GM12878 (cell line): ENCODE measurements at regions of chr6 and their contacts with region 1.

Region 1: GRCh38 chr6:47631269-47631772 is 67.1 kb upstream of the ADGRF4 start:
- DNase-seq: peak; percentile 32
- ATAC-seq: peak; percentile 79
- H3K4me3 ChIP-seq: no peak overlapping the region
- H3K27ac ChIP-seq: no peak overlapping the region
- H3K4me1 ChIP-seq: no peaks in the 10 kb centered on the region
- H3K27me3 ChIP-seq: no peaks in the 10 kb centered on the region
- CTCF ChIP-seq: peak; percentile 31 to 57 (median 41); a peak in 4 of 6 replicates
- EP300 ChIP-seq: no peak
- POLR2A ChIP-seq: no peak
- RAD21 ChIP-seq: peak; percentile 87

Region 2: GRCh38 chr6:47407348-47408281 is 223.7 kb before region 1 on chr6:
- CTCF ChIA-PET with region 1: interaction called, 84 read pairs
- POLR2A ChIA-PET with region 1: no interaction called
- RAD21 ChIA-PET with region 1: interaction called, 47 read pairs
- SMC1A ChIA-PET with region 1: interaction called, 48 read pairs
- in situ Hi-C with region 1: loop called (anchors 10 kb)
- intact Hi-C with region 1: no loop called
- DNase-seq: no peak
- ATAC-seq: no peak
- H3K4me3 ChIP-seq: no peak overlapping the region
- H3K27ac ChIP-seq: no peak overlapping the region
- H3K4me1 ChIP-seq: no peaks in the 10 kb centered on the region
- H3K27me3 ChIP-seq: no peaks in the 10 kb centered on the region
- CTCF ChIP-seq: no peak
- EP300 ChIP-seq: no peak
- POLR2A ChIP-seq: no peak
- RAD21 ChIP-seq: no peak

Region 3: GRCh38 chr6:47581591-47581990 is 49.7 kb before region 1 on chr6:
- CTCF ChIA-PET with region 1: no interaction called
- POLR2A ChIA-PET with region 1: no interaction called
- RAD21 ChIA-PET with region 1: no interaction called
- SMC1A ChIA-PET with region 1: no interaction called
- in situ Hi-C with region 1: no loop called
- intact Hi-C with region 1: no loop called
- DNase-seq: no peak
- ATAC-seq: peak; percentile 83
- H3K4me3 ChIP-seq: no peak overlapping the region
- H3K27ac ChIP-seq: no peak overlapping the region
- H3K4me1 ChIP-seq: no peaks in the 10 kb centered on the region
- H3K27me3 ChIP-seq: no peaks in the 10 kb centered on the region
- CTCF ChIP-seq: no peak
- EP300 ChIP-seq: no peak
- POLR2A ChIP-seq: no peak
- RAD21 ChIP-seq: no peak

Region 4: DNA sequence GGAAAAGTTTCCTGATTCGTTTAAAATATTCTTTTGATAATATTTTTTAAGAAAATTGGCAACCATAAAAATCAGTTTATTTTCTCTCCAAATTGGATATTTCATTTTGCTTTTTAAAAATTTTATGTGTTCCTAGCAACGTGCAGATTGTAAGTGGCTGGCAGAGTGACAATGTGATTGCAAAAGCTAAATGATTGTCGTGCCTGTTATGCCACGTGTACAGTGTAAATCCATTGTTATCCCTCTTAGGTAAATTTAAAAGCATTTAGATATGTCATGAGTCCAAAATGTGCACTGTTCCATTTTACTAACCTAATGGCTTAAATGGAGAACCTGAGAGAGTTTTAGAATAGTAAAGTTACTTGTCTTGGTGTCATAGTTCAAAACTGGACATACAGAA is 27.3 kb before region 1 on chr6:
- CTCF ChIA-PET with region 1: interaction called, 5 read pairs
- POLR2A ChIA-PET with region 1: no interaction called
- RAD21 ChIA-PET with region 1: interaction called, 7 read pairs
- SMC1A ChIA-PET with region 1: interaction called, 12 read pairs
- in situ Hi-C with region 1: no loop called
- intact Hi-C with region 1: no loop called
- DNase-seq: no peak
- ATAC-seq: no peak
- H3K4me3 ChIP-seq: no peak overlapping the region
- H3K27ac ChIP-seq: no peak overlapping the region
- H3K4me1 ChIP-seq: no peaks in the 10 kb centered on the region
- H3K27me3 ChIP-seq: no peaks in the 10 kb centered on the region
- CTCF ChIP-seq: no peak
- EP300 ChIP-seq: no peak
- POLR2A ChIP-seq: no peak
- RAD21 ChIP-seq: no peak

Region 5: GRCh38 chr6:47729019-47729418 is 97.7 kb after region 1 on chr6:
- CTCF ChIA-PET with region 1: interaction called, 154 read pairs
- POLR2A ChIA-PET with region 1: interaction called, 9 read pairs
- RAD21 ChIA-PET with region 1: interaction called, 114 read pairs
- SMC1A ChIA-PET with region 1: interaction called, 184 read pairs
- in situ Hi-C with region 1: no loop called
- intact Hi-C with region 1: loop called (anchors 1 kb)
- DNase-seq: no peak
- ATAC-seq: no peak
- H3K4me3 ChIP-seq: no peak overlapping the region
- H3K27ac ChIP-seq: no peak overlapping the region
- H3K4me1 ChIP-seq: no peaks in the 10 kb centered on the region
- H3K27me3 ChIP-seq: no peaks in the 10 kb centered on the region
- CTCF ChIP-seq: no peak
- EP300 ChIP-seq: no peak
- POLR2A ChIP-seq: no peak
- RAD21 ChIP-seq: no peak

Region 6: DNA sequence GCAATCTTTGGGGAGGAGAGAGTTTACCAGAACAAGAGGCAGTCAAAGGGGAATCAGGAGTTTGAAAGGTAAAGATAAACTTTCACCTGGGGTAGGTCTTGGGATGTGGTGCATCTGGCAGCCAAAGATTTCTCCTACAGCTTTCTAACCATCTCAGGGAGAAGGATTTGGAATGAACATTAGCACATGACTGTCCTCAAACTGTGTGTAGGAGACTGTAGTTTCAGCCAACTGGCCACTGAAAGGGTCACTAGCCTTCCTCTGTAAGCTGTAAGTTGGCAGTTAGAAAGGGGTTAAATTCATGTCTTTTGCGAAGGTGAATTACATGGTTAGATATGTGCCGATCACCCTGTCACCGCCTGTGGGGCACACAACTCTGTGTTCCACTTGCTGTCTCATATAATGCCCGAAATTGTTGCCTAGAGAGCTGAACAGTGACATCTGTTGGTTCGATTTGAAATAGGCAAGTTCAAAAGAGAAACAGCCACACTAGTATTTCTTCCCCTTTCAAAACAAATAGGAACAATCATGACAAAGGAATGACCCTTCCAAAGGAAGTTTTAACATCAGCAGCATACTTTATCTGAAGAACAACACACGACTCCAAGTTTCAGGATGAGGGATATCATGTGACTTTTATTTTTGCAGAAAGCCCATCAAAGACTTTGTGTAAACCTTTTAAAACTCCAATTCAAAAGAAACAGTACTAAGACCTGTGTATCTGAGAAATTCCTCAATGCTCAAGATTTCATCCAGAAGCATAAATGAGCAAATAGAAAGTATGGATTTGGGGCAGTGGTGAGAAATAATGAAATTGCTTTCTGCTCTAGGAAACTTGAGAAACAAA is 149.4 kb after region 1 on chr6:
- CTCF ChIA-PET with region 1: interaction called, 117 read pairs
- POLR2A ChIA-PET with region 1: interaction called, 3 read pairs
- RAD21 ChIA-PET with region 1: interaction called, 48 read pairs
- SMC1A ChIA-PET with region 1: interaction called, 41 read pairs
- in situ Hi-C with region 1: loop called (anchors 5 kb)
- intact Hi-C with region 1: loop called (anchors 1 kb)
- DNase-seq: no peak
- ATAC-seq: peak; percentile 96
- H3K4me3 ChIP-seq: no peak overlapping the region
- H3K27ac ChIP-seq: no peak overlapping the region
- H3K4me1 ChIP-seq: no peaks in the 10 kb centered on the region
- H3K27me3 ChIP-seq: peaks cover 0 to 2% of the 10 kb centered on the region in 2 experiments; a peak in 2 of 4 replicates
- CTCF ChIP-seq: peak; percentile 60 to 65 (median 61)
- EP300 ChIP-seq: no peak
- POLR2A ChIP-seq: no peak
- RAD21 ChIP-seq: peak; percentile 86